ENCODE measurements at regions of chr16 and their contacts with region 1.

Region 1: DNA sequence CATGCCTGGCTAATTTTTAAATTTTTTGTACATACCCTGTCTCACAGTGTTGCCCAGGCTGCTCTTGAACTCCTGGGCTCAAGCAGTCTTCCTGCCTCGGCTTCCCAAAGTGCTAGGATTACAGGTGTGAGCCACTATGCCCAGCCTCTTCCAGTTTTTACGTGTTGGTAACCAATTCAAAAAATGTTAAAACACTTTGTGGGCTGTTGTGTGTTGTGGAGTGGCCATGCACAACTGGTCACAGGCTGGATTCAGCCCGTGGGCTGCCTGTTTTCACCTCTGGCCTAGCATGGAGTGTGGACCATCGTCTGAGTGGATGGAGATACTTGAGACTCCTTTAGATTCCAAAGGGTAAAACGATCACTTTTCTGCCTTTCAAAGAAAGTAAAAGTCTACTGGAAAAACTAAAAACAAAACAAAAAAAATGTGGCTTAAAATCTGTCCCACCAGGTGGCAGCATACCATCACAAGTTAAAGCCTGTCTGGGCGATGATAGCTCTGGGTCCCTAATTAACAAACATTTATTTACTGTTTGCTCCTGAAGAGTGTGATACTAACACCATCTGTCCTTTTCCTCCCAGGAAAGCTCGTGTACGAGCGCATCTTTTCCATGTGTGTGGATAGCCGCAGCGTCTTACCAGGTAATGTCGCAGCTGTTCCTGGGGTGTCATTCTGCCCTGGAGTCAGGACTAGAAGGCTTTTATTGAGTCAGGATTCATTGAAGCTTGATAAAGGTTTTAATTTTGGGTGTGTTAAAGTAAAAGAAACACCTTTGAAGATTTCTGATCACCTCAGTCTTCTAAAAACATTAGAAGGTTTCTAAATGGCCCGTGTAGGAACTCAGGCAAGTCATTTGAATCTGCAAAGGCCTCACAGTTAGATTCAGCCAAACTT is 45.8 kb downstream of the VPS35L start:
- DNase-seq: peak; percentile 20 to 58
- H3K4me3 ChIP-seq: no peak overlapping the region
- H3K4me1 ChIP-seq: no peaks in the 10 kb centered on the region
- H3K27me3 ChIP-seq: no peaks in the 10 kb centered on the region

Region 2: DNA sequence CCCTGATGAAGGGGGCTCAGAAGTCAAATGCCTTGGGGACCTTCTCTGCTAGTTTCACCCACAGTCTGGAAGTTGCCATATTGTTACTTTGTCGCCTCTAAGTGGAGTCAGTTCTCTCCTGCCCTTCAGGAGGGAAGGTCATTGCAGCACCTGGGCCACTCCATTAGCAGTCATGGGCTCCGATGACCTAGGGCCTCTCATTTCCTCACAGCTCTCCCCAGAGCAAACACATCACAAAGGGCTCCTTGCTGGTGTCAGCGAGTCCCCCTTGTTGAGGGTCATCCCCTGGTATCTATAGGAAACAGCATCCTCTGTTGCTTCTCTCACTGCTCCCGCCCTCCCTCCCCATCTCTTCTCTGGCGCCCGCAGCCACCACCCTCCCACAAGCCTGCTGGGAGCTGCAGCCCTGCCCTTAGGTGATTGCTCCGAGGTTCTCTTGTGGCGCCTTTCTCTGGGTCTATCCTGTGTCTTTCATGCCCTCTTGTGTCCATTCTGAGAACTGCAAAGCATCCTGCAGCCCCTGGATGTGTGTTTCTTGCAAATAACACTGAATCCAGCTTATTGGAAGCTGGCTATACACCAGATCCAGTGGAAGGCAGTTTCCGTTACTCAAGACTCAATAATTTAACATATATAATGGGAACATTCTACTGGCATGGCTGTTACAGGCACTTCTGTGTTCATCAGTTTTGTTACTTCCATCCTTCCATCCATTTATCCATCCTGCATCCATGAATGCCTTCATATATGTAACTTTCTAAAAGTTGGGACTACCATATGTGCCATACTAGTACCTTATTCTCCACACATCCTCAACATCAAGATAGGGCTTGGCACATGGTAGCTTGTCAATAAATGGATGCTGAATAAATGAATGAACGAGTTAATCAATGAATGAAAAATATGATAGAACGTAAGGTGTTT is 782.0 kb after region 1 on chr16:
- in situ Hi-C with region 1: loop called (anchors 25 kb)
- DNase-seq: peak; percentile 66 to 79
- H3K4me3 ChIP-seq: no peak overlapping the region
- H3K4me1 ChIP-seq: no peaks in the 10 kb centered on the region
- H3K27me3 ChIP-seq: no peaks in the 10 kb centered on the region

Measured in HAP-1 (cell line).